ENCODE measurements at regions of chr6 and their contacts with region 1.

Region 1: GRCh38 chr6:26122793-26123674 is 35.8 kb downstream of the HFE start:
- DNase-seq: peak; percentile 97
- H3K4me3 ChIP-seq: peak overlapping the region; percentile 73
- H3K27ac ChIP-seq: peak overlapping the region; percentile 97
- H3K4me1 ChIP-seq: peaks cover 8% of the 10 kb centered on the region
- H3K27me3 ChIP-seq: no peaks in the 10 kb centered on the region
- CTCF ChIP-seq: no peak

Region 2: GRCh38 chr6:25851961-25852360 is 271.1 kb before region 1 on chr6:
- intact Hi-C with region 1: no loop called
- DNase-seq: no peak
- H3K4me3 ChIP-seq: no peak overlapping the region
- H3K27ac ChIP-seq: no peak overlapping the region
- H3K4me1 ChIP-seq: no peaks in the 10 kb centered on the region
- H3K27me3 ChIP-seq: no peaks in the 10 kb centered on the region
- CTCF ChIP-seq: no peak

Region 3: GRCh38 chr6:26057899-26058298 is 65.1 kb before region 1 on chr6:
- intact Hi-C with region 1: loop called (anchors 2 kb)
- DNase-seq: no peak
- H3K4me3 ChIP-seq: no peak overlapping the region
- H3K27ac ChIP-seq: no peak overlapping the region
- H3K4me1 ChIP-seq: peaks cover 5% of the 10 kb centered on the region
- H3K27me3 ChIP-seq: no peaks in the 10 kb centered on the region
- CTCF ChIP-seq: no peak

Region 4: DNA sequence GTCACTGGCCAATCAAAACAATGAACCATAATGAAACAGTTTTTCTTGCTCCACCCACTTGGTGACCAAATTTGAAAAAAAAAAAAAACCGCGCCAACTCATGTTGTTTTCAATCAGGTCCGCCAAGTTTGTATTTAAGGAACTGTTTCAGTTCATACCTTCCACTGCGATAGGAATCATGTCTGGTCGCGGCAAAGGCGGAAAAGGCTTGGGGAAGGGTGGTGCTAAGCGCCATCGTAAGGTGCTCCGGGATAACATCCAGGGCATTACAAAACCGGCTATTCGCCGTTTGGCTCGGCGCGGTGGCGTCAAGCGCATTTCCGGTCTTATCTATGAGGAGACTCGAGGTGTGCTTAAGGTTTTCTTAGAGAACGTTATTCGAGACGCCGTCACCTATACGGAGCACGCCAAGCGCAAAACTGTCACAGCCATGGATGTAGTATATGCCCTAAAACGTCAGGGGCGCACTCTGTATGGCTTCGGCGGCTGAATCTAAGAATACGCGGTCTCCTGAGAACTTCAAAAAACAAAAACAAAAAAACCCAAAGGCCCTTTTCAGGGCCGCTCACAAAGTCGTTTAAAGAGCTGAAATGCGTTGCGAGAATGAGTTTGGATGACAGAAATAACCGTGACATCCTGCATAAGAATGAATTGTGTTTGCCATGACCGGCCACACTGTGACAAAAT is 19.1 kb before region 1 on chr6:
- intact Hi-C with region 1: loop called (anchors 1 kb)
- DNase-seq: peak; percentile 91
- H3K4me3 ChIP-seq: peak overlapping the region; percentile 31
- H3K27ac ChIP-seq: peak overlapping the region; percentile 93
- H3K4me1 ChIP-seq: no peaks in the 10 kb centered on the region
- H3K27me3 ChIP-seq: no peaks in the 10 kb centered on the region
- CTCF ChIP-seq: no peak

Region 5: GRCh38 chr6:26156076-26156849 is 33.2 kb after region 1 on chr6:
- intact Hi-C with region 1: loop called (anchors 2 kb)
- DNase-seq: peak; percentile 93
- H3K4me3 ChIP-seq: peak overlapping the region; percentile 50
- H3K27ac ChIP-seq: peak overlapping the region; percentile 98
- H3K4me1 ChIP-seq: no peaks in the 10 kb centered on the region
- H3K27me3 ChIP-seq: no peaks in the 10 kb centered on the region
- CTCF ChIP-seq: no peak